Posterior vena cava (tissue), 2 donors: ENCODE measurements at regions of chr9 and their contacts with region 1.

Region 1: DNA sequence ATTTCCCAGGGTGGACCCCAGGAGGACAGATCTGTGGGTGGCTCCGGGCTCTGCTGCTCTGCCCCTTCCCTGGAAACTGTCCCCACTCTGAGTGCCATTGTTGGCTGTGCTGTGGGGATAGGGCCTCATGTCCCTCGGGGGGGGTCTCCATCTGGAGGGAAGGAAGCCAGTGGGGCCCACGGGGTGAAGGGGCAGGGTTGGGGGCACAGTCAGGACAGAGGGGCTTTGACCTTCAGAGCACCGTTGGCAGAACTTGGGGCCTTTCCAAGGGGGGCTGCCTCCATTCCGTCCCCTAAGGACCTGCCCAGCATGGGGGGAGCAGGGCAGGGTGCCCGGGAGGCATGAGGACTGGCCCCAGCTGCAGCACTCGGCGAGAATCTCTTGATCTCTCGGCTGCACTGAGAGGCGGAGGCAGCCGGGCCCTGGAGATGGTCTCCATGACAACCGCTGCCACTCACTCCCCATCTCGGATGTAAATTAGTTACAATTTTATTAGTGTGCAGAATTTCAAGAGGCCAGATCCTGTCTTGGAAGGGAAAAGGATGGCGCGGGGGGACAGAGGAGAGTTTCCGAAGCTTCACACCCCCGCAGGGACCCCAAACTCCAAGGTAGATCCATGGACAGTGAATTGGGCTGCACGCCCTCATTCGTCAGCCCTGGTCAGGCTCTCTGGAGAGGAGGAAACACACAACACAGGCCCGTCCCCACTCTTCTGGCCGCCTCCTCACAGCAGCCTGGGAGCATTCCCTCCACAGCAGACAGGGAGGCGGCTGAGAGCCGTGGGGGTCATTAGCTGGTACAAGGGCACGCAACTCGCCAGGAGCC is 216.2 kb upstream of the IER5L start:
- DNase-seq: peak; percentile 78

Region 2: GRCh38 chr9:129353697-129354336 is 40.5 kb before region 1 on chr9:
- intact Hi-C with region 1: loop called in 1 of 2 experiments (anchors 1 kb)
- DNase-seq: no peak

Region 3: DNA sequence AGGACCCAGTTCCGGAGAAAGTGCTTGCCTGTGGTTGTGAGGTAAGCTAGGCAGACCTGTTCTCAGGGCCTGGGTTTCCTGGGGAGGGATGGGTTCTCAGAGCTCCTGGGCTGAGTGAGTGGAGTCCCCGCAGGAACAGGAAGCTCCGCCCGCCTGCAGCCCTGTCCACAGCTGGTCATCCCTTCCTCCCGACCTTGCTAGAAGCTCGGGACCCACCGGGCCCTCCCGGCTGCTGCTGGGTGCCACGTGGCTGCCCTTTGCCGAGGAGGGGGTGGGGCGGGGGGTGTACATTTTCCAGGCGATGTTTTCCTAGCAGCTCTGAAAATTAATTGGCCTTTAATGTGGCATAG is 28.5 kb after region 1 on chr9:
- intact Hi-C with region 1: loop called in 1 of 2 experiments (anchors 1 kb)
- DNase-seq: no peak

Region 4: GRCh38 chr9:129696938-129697650 is 302.8 kb after region 1 on chr9:
- intact Hi-C with region 1: no loop called
- DNase-seq: peak; percentile 95